Activated CD4-positive, alpha-beta T cell treated with anti-CD3 and anti-CD28 coated beads, Interleukin-2, amount 10 ng/mL, durations not matched to agents 24 days and 14 days (primary cell): ENCODE measurements at regions of chr20 and their contacts with region 1.

Region 1: GRCh38 chr20:1325173-1326030 is 3.5 kb downstream of the SDCBP2 start:
- DNase-seq: peak; percentile 99
- H3K4me3 Mint-ChIP-seq: no peak overlapping the region
- H3K27ac Mint-ChIP-seq: no peak overlapping the region
- H3K4me1 Mint-ChIP-seq: peaks cover 36% of the 10 kb centered on the region
- H3K27me3 Mint-ChIP-seq: no peaks in the 10 kb centered on the region

Region 2: DNA sequence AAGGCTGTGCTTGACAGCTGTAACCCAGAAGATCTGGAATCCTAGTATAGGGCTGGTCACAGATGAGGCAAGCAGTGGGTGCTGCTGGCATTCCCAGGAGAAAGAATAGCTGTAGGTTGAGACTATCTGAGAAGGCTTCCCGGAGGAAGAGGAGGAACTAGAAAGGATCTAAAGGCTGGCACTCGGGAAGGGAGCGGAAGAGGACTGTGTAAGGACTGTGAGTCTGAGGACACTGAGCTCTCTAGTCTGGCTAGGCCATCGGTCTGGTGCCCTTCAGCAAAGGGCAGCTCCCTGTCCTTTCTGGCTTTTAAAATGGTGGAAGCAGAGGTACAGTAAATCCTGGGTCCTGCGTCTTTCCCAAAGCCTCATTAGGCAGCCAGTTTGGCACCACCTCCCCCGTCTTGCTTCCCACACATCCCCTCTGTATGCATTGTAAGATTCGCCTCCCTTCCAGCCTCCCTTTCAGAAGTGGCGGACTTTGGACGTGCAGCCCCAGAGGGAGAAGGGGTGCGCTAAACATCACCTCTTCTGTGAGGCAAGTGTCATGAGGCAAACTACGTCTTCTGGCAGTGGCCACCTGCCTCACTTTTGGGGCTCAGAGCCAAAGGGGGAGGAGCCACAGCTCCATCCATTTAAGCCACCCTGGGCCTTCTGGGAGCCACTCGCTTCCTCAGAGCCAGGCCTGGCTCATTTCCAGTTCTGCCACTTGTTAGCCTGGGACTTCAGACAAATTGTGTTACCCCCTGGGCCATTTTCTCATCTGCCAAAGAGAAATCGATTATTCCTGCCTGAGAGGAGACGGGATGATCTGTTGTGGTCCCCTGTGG is 50.7 kb before region 1 on chr20:
- intact Hi-C with region 1: no loop called
- DNase-seq: peak; percentile 47
- H3K4me3 Mint-ChIP-seq: no peak overlapping the region
- H3K27ac Mint-ChIP-seq: no peak overlapping the region
- H3K4me1 Mint-ChIP-seq: no peaks in the 10 kb centered on the region
- H3K27me3 Mint-ChIP-seq: no peaks in the 10 kb centered on the region

Region 3: DNA sequence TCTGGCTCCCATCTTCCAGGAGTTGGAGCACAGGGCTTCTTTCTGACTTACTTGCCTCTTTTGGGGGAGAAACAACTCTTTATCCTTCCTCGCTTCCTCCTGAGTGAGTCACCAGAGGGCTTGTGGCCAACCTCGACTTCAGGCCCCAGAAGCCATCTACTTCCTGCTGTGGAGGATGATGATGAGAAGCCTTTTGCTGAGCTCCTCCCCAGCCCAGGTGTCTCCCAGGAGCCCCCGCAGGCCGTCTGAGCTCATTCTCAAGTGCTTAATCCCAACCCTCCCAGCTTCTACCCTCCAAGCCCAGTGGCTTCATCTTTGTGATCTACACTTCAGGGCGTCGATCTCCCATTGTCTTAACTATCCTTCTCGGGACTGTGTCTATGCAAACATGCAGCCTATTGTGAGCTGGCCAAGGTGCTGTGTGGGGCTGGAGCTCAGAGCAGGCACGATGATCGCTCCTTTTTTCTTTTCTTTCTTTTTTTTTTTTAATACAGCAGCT is 24.3 kb before region 1 on chr20:
- intact Hi-C with region 1: loop called (anchors 2 kb)
- DNase-seq: peak; percentile 88
- H3K4me3 Mint-ChIP-seq: peak overlapping the region; percentile 80
- H3K27ac Mint-ChIP-seq: peak overlapping the region; percentile 90
- H3K4me1 Mint-ChIP-seq: peaks cover 20% of the 10 kb centered on the region
- H3K27me3 Mint-ChIP-seq: no peaks in the 10 kb centered on the region

Region 4: DNA sequence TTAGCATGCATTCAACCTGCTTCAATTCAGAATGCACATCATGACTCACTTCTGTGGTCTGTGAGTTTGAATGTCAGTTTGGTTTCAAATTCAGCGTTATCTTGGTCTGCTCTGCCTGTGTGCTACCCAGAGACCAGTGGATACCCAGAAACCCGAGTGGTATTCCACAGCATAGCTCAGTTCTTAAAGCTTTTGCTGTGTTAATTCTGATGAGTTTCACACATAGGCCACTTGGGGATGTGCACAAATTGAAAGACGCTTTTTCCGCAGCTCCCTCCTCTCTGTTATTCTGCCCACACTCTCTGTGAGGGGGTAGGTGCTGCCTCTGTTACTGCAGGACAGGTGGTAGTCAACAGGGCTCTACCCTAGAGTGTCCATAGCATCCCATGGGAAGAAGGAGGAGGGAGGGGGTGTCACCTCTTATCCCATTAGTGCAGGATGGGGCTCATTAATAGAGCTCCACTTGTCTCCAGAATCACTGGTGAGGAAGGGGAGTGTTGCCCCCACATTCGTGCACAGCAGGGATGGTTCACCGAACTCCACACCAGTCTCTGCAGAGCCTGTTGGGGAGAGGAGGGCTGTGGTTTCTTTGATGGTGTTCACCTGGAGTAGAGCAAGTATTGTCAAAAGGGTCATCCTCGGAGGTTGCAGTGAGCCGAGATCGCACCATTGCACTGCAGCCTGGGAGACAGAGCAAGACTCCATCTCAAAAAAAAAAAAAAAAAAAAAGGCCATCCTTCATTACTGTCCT is 32.7 kb after region 1 on chr20:
- intact Hi-C with region 1: loop called (anchors 1 kb)
- DNase-seq: peak; percentile 86
- H3K4me3 Mint-ChIP-seq: peak overlapping the region; percentile 69
- H3K27ac Mint-ChIP-seq: peak overlapping the region; percentile 83
- H3K4me1 Mint-ChIP-seq: peaks cover 51% of the 10 kb centered on the region
- H3K27me3 Mint-ChIP-seq: no peaks in the 10 kb centered on the region

Region 5: DNA sequence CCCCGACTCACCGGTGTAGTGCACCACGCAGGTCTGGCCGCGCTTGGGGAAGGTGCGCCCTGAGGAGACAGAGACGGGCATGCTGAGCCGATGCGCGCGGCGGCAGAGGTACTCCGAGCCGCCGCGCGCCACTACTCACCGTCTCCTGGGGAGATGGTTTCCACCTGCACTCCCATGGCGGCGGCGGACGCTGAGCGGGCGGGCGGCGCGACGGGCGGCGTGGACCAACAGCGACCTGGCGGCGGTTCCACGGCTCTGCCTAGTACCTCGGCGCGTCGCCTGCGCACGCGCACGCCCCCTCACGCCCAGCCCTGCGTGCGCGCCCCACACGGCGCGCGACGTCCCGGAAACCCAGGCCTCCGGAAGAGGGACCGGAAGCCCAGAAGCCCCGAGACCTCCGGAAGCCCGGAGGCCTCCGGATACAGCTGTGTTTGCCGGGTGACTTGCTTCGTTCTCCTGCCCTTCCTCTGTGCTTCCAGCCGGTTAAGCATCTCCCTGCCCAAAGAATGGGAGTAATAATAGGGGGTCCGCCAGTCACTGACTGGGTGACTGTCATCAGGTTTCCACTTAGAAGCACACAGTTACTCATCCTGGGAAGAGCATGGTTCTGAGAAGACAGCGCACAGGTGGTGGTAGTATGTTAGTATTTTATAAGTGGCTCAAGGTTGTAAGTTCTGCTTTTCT is 67.6 kb after region 1 on chr20 and contains the start of gene FKBP1A:
- intact Hi-C with region 1: loop called (anchors 1 kb)
- DNase-seq: peak; percentile 97
- H3K4me3 Mint-ChIP-seq: peak within 1 kb of the TSS; percentile 79
- H3K27ac Mint-ChIP-seq: peak within 1 kb of the TSS; percentile 90
- H3K4me1 Mint-ChIP-seq: peaks cover 51% of the 10 kb centered on the region
- H3K27me3 Mint-ChIP-seq: peaks cover 3% of the 10 kb centered on the region
- total RNA-seq, gene FKBP1A: 291 and 292 TPM in 2 replicates

Region 6: DNA sequence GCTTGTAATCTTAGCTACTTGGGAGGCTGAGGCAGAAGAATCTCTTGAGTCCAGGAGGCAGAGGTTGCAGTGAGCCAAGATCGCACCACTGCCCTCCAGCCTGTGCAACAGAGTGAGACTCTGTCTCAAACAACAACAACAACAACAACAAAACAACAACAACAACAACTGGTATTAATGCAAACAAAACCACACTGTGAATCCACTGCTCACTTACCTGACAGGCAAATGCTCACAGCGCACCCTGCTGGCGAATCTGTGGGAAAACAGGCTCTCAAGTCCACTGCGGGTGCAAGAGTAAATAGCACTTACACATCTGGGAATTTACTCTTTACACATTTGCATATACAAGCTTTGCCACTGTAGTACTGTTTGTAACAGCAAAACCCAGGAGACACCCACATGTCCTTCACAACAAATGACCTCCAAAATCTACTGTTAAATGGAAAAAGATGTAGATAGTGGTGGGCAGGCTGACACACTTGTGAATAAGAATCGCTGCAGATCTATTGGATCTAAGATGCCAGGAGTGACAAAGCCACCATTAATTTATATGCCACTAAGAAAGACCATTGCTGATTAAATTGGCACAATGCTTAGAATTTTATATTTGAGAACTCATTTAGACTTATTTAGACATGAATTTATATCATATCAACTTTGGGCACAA is 112.0 kb after region 1 on chr20:
- intact Hi-C with region 1: loop called (anchors 1 kb)
- DNase-seq: peak; percentile 93
- H3K4me3 Mint-ChIP-seq: peak overlapping the region; percentile 19
- H3K27ac Mint-ChIP-seq: peak overlapping the region; percentile 52
- H3K4me1 Mint-ChIP-seq: peaks cover 26% of the 10 kb centered on the region
- H3K27me3 Mint-ChIP-seq: peaks cover 4% of the 10 kb centered on the region